ENCODE measurements at regions of chr22 and their contacts with region 1.

Region 1: GRCh38 chr22:30079952-30080533 is at the start of gene HORMAD2:
- DNase-seq: no peak
- H3K4me3 ChIP-seq: no peak within 1 kb of the TSS
- H3K27ac ChIP-seq: no peak within 1 kb of the TSS
- H3K4me1 ChIP-seq: no peaks in the 10 kb centered on the region
- H3K27me3 ChIP-seq: no peaks in the 10 kb centered on the region
- CTCF ChIP-seq: no peak
- total RNA-seq, gene HORMAD2: not detected

Region 2: GRCh38 chr22:29689880-29690213 is 390.2 kb before region 1 on chr22:
- intact Hi-C with region 1: loop called (anchors 10 kb)
- DNase-seq: peak; percentile 71
- H3K4me3 ChIP-seq: no peak overlapping the region
- H3K27ac ChIP-seq: no peak overlapping the region
- H3K4me1 ChIP-seq: no peaks in the 10 kb centered on the region
- H3K27me3 ChIP-seq: no peaks in the 10 kb centered on the region
- CTCF ChIP-seq: peak; percentile 81

Region 3: GRCh38 chr22:29925402-29925801 is 154.6 kb before region 1 on chr22:
- intact Hi-C with region 1: no loop called
- DNase-seq: no peak
- H3K4me3 ChIP-seq: no peak overlapping the region
- H3K27ac ChIP-seq: no peak overlapping the region
- H3K4me1 ChIP-seq: no peaks in the 10 kb centered on the region
- H3K27me3 ChIP-seq: no peaks in the 10 kb centered on the region
- CTCF ChIP-seq: no peak

Measured in colonic mucosa (tissue), 4 donors.